ENCODE measurements at regions of chr12 and their contacts with region 1.

Region 1: DNA sequence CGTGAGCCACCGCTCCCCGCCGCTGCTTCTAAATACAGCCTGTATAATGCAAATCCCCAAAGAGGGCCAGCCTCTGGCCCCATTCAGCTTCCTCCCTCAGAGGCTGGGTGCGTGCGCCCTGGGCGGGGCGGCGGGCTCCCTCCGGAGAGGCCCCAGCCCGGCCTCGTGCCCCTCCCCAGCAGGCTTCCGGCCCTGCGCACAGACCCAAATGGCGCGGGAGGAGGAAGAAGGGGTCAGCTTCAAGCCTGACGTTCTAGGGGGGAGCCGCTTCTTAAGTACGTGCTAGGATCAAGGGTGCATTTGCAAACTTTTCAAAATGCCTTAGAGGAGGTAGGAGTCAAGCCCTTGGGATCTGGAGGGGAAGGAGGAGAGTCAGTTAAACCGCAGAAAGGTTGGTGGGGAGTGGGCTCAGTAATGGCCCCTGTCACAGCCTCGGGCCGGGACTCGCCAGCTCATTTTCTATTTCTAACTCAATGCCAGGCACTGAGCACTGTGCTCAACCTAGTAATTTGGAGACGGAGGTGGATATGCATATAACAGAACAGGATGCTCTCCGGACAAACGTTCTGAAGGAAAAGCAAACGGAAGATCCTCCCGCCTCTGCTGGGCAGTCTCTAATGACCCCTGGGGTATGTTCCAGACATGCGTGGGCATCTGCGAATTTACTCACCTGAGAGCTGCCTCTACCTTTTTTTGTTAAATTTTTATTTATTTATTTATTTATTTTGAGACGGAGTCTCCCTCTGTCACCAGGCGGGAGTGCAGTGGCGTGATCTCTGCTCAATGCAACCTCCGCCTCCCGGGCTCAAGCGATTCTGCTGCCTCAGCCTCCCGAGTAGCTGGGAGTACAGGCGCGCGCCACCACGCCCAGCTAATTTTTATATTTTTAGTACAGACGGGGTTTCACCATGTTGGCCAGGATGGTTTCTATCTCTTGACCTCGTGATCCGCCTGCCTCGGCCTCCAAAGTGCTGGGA is 32.3 kb downstream of the NINJ2 start:
- DNase-seq: no peak
- H3K4me3 Mint-ChIP-seq: no peak overlapping the region
- H3K27ac Mint-ChIP-seq: peak overlapping the region; percentile 89
- H3K4me1 Mint-ChIP-seq: peaks cover 15% of the 10 kb centered on the region
- H3K27me3 Mint-ChIP-seq: no peaks in the 10 kb centered on the region
- CTCF ChIP-seq: no peak

Region 2: GRCh38 chr12:575948-576612 is 54.9 kb before region 1 on chr12:
- CTCF ChIA-PET with region 1: interaction called, 11 read pairs
- POLR2A ChIA-PET with region 1: interaction called, 16 read pairs
- intact Hi-C with region 1: no loop called
- DNase-seq: peak; percentile 78
- H3K4me3 Mint-ChIP-seq: peak overlapping the region; percentile 35
- H3K27ac Mint-ChIP-seq: peak overlapping the region; percentile 91
- H3K4me1 Mint-ChIP-seq: peaks cover 44% of the 10 kb centered on the region
- H3K27me3 Mint-ChIP-seq: no peaks in the 10 kb centered on the region
- CTCF ChIP-seq: peak; percentile 99

Region 3: GRCh38 chr12:586318-587071 is 44.4 kb before region 1 on chr12:
- CTCF ChIA-PET with region 1: no interaction called
- POLR2A ChIA-PET with region 1: no interaction called
- intact Hi-C with region 1: no loop called
- DNase-seq: no peak
- H3K4me3 Mint-ChIP-seq: no peak overlapping the region
- H3K27ac Mint-ChIP-seq: no peak overlapping the region
- H3K4me1 Mint-ChIP-seq: no peaks in the 10 kb centered on the region
- H3K27me3 Mint-ChIP-seq: no peaks in the 10 kb centered on the region
- CTCF ChIP-seq: no peak

Measured in MCF 10A (cell line).